PC-3 (cell line): ENCODE measurements at regions of chr5 and their contacts with region 1.

Region 1: DNA sequence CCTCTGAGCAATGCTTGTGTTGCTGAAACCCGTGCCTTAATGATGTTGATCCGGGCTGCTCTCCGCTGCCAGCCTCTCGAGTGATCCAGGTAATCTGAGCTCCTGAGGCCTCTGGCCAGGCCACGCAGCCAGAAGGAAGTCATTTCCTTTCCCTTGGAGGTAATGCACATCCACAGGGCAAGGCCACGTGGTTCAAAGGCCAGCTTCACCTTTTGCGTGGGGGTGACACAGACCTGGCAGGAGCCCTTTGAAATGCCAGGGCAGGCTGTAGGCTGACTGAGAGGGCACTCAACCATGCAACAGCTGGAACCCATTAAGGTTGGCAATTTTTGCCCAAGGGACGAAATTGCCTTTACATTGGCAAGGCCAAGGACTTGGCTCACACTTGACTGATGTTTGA is 80.4 kb downstream of the LIX1 start:
- DNase-seq: no peak
- ATAC-seq: no peak
- H3K4me3 ChIP-seq: no peak overlapping the region
- H3K27ac ChIP-seq: no peak overlapping the region
- H3K4me1 ChIP-seq: no peaks in the 10 kb centered on the region
- H3K27me3 ChIP-seq: peaks cover 3% of the 10 kb centered on the region; the same call in 1 of the 2 replicates
- CTCF ChIP-seq: no peak

Region 2: DNA sequence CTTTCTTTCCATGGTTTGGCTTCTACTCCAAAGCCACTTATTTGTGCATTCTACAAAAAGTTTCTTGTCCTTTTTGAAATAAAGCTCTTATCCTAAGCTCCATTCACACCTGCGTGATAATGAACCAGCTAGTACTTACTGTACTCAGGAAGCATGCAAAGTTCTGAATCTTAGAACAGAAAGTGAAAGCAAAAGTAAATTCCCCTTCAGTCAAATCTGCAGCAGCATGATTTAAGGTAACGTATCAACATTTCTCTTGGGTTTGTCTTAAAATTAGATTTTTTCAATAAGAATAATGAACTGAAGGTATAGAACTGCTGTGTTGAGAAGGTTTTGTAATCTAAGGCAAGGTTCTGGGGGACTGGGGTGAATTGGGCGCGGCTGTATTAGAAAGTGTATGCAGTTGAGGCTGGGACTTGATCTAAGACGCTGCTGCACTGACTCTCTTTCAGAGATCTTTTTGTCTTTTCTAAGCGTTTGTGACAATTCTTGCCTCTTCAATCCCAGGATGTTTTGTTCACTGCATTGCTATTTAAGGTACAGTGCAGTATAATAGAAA is 185.7 kb before region 1 on chr5 and contains the start of gene ERAP2:
- CTCF ChIA-PET with region 1: no interaction called
- POLR2A ChIA-PET with region 1: no interaction called
- intact Hi-C with region 1: no loop called
- DNase-seq: peak; percentile 59
- ATAC-seq: peak; percentile 43
- H3K4me3 ChIP-seq: peak within 1 kb of the TSS; percentile 83
- H3K27ac ChIP-seq: peak within 1 kb of the TSS; percentile 42
- H3K4me1 ChIP-seq: peaks cover 26% of the 10 kb centered on the region
- H3K27me3 ChIP-seq: no peaks in the 10 kb centered on the region
- CTCF ChIP-seq: no peak
- total RNA-seq, gene ERAP2: 9.6 and 12.0 TPM in 2 replicates

Region 3: GRCh38 chr5:97499605-97500004 is 437.6 kb after region 1 on chr5:
- CTCF ChIA-PET with region 1: interaction called, 18 read pairs
- POLR2A ChIA-PET with region 1: no interaction called
- intact Hi-C with region 1: no loop called
- DNase-seq: no peak
- ATAC-seq: no peak
- H3K4me3 ChIP-seq: no peak overlapping the region
- H3K27ac ChIP-seq: no peak overlapping the region
- H3K4me1 ChIP-seq: peaks cover 11% of the 10 kb centered on the region
- H3K27me3 ChIP-seq: no peaks in the 10 kb centered on the region
- CTCF ChIP-seq: no peak

Region 4: DNA sequence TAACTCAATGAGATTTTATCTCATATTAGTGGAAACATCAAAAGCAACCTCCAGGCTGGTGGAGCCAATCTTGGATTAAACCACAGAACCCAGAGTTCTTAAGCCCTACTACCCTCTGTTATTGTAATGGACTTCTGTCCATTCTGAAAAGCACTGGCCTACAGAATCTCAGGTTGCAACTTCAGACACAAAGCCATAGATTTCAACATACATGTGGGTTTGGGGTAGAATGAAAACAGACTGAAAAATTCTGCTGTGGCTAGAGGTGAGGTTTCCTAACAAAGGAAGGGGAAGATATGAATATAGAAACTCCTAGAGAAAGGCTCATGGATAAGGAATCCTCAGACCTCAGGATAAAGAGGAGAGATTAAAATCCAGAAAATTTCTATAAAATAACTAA is 690.8 kb after region 1 on chr5:
- CTCF ChIA-PET with region 1: no interaction called
- POLR2A ChIA-PET with region 1: no interaction called
- intact Hi-C with region 1: no loop called
- DNase-seq: no peak
- ATAC-seq: no peak
- H3K4me3 ChIP-seq: no peak overlapping the region
- H3K27ac ChIP-seq: no peak overlapping the region
- H3K4me1 ChIP-seq: no peaks in the 10 kb centered on the region
- H3K27me3 ChIP-seq: no peaks in the 10 kb centered on the region
- CTCF ChIP-seq: no peak